ENCODE measurements at regions of chr16 and their contacts with region 1.

Region 1: GRCh38 chr16:57899771-57900661 is 70.9 kb downstream of the CNGB1 start:
- DNase-seq: peak; percentile 68 to 83 (median 82)
- ATAC-seq: peak; percentile 87
- H3K4me3 ChIP-seq: no peak overlapping the region
- H3K27ac ChIP-seq: no peak overlapping the region
- H3K4me1 ChIP-seq: peaks cover 2 to 8% of the 10 kb centered on the region in 2 experiments; a peak in 3 of 5 replicates
- H3K27me3 ChIP-seq: peaks cover 12 to 38% of the 10 kb centered on the region in 2 experiments; a peak in 4 of 5 replicates
- CTCF ChIP-seq: peak; percentile 85 to 92 (median 90)
- EP300 ChIP-seq: no peak
- POLR2A ChIP-seq: no peak
- RAD21 ChIP-seq: peak; percentile 87 to 94

Region 2: DNA sequence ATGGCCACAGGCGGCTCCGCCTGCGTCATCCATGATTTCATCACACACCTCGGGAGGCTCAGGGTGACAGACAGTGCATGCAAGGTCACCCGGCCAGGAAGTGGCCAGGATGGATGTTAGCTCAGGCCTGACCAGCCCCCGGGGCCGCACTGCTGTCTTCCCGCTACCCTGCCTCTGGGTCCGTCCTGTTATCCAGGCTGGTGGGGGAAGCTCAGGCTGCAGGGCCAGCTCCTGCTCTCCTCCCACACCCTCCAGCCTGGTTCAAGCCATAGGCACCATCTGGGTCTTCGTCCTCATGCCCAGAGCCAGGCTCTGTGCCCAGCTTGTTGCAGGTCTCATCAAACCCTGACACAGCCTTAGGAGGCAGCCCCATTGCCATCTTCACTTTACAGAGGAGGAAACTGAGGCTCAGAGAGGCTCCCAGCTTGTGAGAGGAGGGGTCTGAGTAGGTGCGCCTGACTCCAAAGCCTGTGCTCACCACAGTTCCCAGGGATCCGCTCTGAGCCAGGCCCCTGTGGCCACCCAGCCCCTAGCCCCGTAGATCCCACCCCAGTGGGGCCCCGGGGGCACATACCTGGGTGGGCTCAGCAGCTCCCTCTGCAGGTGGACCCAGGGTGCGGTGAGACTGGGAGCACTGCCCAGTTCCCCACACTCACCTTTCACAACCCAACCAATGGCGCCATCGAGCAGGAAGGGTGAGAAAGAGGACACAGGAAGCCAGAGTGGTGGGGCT is 232.3 kb before region 1 on chr16:
- CTCF ChIA-PET with region 1: no interaction called
- POLR2A ChIA-PET with region 1: no interaction called
- in situ Hi-C with region 1: no loop called
- intact Hi-C with region 1: loop called (anchors 10 kb)
- DNase-seq: peak; percentile 72 to 78 (median 75)
- ATAC-seq: peak; percentile 95
- H3K4me3 ChIP-seq: no peak overlapping the region
- H3K27ac ChIP-seq: peak overlapping the region; percentile 72
- H3K4me1 ChIP-seq: peaks cover 24 to 38% of the 10 kb centered on the region in 2 experiments
- H3K27me3 ChIP-seq: no peaks in the 10 kb centered on the region
- CTCF ChIP-seq: peak; percentile 48 to 63 (median 51)
- EP300 ChIP-seq: peak; percentile 84
- POLR2A ChIP-seq: no peak
- RAD21 ChIP-seq: 0 out of 4 replicates have a peak, but pooled peaks of 1 of the 2 experiments have one; percentile 18

Region 3: DNA sequence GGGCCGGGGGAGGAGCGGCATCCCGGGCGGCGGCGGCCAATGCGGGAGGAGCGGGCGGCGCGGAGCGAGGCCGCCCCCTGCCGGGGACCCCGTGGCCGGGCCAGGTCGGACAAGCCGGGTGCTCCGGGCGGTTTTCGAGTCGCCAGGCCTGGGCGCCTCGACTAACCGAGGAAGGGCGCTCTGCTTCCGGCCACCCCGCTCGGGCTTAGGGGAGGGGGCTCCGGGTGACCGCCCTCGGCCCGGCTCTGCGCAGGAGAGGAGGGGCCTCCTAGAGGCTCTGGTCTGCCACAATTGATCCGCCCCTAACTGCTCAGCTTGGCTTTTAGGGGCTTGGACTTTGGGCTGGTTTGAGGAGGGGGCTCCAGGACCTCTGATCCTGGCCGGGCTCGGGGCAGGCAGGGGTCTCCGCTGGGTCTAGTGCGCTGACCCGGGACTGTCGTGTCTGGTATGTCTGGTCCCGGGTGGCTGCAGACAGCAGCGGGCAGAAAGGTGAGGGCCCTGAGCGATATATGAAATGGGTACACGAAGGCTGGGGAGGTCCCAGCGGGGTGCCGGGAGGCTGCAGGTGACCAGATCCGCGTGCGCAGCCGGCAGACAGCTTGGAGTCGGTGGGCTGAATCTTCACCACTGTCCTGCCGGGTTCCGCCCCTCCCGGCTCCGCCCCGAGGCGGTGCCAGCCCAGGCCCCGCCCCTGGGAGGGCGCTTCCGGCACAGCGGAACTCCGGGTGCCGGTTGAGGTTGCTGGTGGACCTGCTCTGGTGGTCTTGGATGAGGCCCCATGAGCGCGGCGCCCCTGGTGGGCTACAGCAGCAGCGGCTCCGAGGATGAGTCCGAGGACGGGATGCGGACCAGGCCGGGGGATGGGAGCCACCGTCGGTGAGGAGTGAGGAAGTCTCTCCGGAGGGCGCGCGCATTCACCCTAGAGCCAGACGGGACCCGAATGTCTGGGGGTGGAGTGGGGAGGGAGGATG is 101.0 kb after region 1 on chr16 and contains the start of gene USB1:
- CTCF ChIA-PET with region 1: interaction called, 33 read pairs
- POLR2A ChIA-PET with region 1: interaction called, 3 read pairs
- in situ Hi-C with region 1: loop called (anchors 5 kb)
- intact Hi-C with region 1: loop called (anchors 1 kb)
- DNase-seq: peak; percentile 93 to 96 (median 95)
- ATAC-seq: peak; percentile 94
- H3K4me3 ChIP-seq: peak within 1 kb of the TSS; percentile 94
- H3K27ac ChIP-seq: peak within 1 kb of the TSS; percentile 71
- H3K4me1 ChIP-seq: peaks cover 21 to 31% of the 10 kb centered on the region in 2 experiments; a peak in 4 of 5 replicates
- H3K27me3 ChIP-seq: no peaks in the 10 kb centered on the region
- CTCF ChIP-seq: peak; percentile 60 to 85 (median 79); a peak in 5 of 6 replicates
- EP300 ChIP-seq: no peak
- POLR2A ChIP-seq: peak; percentile 88
- RAD21 ChIP-seq: peak; percentile 71 to 76
- polyA plus RNA-seq, gene USB1: 11.6 to 12.1 TPM

Region 4: GRCh38 chr16:58098207-58099096 is 198.4 kb after region 1 on chr16:
- CTCF ChIA-PET with region 1: no interaction called
- POLR2A ChIA-PET with region 1: no interaction called
- in situ Hi-C with region 1: loop called (anchors 10 kb)
- intact Hi-C with region 1: no loop called
- DNase-seq: no peak
- ATAC-seq: no peak
- H3K4me3 ChIP-seq: no peak overlapping the region
- H3K27ac ChIP-seq: no peak overlapping the region
- H3K4me1 ChIP-seq: peaks cover 0 to 8% of the 10 kb centered on the region in 2 experiments; a peak in 2 of 5 replicates
- H3K27me3 ChIP-seq: peaks cover 4 to 13% of the 10 kb centered on the region in 2 experiments; a peak in 3 of 5 replicates
- CTCF ChIP-seq: no peak
- EP300 ChIP-seq: no peak
- POLR2A ChIP-seq: no peak
- RAD21 ChIP-seq: no peak

Region 5: GRCh38 chr16:58121132-58121531 is 221.1 kb after region 1 on chr16:
- CTCF ChIA-PET with region 1: no interaction called
- POLR2A ChIA-PET with region 1: no interaction called
- in situ Hi-C with region 1: no loop called
- intact Hi-C with region 1: loop called (anchors 2 kb)
- DNase-seq: peak; percentile 25 to 87 (median 58)
- ATAC-seq: peak; percentile 78
- H3K4me3 ChIP-seq: peak overlapping the region; percentile 25; the same call in 1 of the 2 replicates
- H3K27ac ChIP-seq: peak overlapping the region; percentile 72
- H3K4me1 ChIP-seq: peaks cover 13 to 37% of the 10 kb centered on the region in 2 experiments; a peak in 4 of 5 replicates
- H3K27me3 ChIP-seq: no peaks in the 10 kb centered on the region
- CTCF ChIP-seq: no peak
- EP300 ChIP-seq: peak; percentile 53; the same call in 1 of the 2 replicates
- POLR2A ChIP-seq: no peak
- RAD21 ChIP-seq: no peak

Region 6: GRCh38 chr16:58487566-58488351 is 587.7 kb after region 1 on chr16:
- CTCF ChIA-PET with region 1: interaction called, 3 read pairs
- POLR2A ChIA-PET with region 1: no interaction called
- in situ Hi-C with region 1: no loop called
- intact Hi-C with region 1: loop called (anchors 10 kb)
- DNase-seq: peak; percentile 83 to 87 (median 84)
- ATAC-seq: peak; percentile 97
- H3K4me3 ChIP-seq: no peak overlapping the region
- H3K27ac ChIP-seq: no peak overlapping the region
- H3K4me1 ChIP-seq: peaks cover 10 to 24% of the 10 kb centered on the region in 2 experiments; a peak in 4 of 5 replicates
- H3K27me3 ChIP-seq: peaks cover 0 to 38% of the 10 kb centered on the region in 2 experiments; a peak in 3 of 5 replicates
- CTCF ChIP-seq: peak; percentile 90 to 97 (median 92)
- EP300 ChIP-seq: no peak
- POLR2A ChIP-seq: no peak
- RAD21 ChIP-seq: peak; percentile 94 to 98

Region 7: DNA sequence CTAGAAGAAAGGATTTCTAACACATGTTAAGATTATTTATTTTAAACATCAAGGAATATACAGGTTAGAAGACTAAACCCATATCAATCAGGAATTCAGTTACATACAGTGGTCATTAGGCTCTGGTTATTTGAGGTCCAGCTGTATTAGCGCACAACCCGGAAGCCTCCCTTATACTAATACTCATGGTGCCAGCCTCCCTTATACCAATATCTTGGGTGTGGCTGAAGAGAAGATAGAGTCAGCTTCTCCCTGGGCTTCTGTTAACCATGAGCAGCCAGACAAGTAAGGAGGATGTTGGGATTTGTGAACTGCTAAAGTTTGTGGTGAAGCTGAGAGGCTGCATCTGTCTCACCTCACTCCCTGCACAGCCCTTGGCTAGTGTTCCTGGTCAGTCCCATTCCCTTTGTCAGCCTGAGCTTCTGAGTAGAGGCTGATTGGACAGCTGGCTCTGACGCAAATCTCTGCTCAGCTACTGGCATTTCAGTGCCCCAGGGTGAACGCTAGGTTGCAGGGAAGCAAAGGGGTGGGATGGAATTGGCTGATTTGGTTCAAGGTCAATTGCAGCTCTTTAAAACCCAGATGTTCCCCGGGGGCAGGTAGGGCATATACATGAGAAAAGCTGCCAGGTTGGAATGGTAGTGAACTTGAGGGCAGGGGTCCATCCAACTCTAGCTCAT is 752.6 kb after region 1 on chr16:
- CTCF ChIA-PET with region 1: no interaction called
- POLR2A ChIA-PET with region 1: interaction called, 3 read pairs
- in situ Hi-C with region 1: no loop called
- intact Hi-C with region 1: loop called (anchors 10 kb)
- DNase-seq: no peak
- ATAC-seq: peak; percentile 10; the same call in 1 of the 3 replicates
- H3K4me3 ChIP-seq: no peak overlapping the region
- H3K27ac ChIP-seq: no peak overlapping the region
- H3K4me1 ChIP-seq: no peaks in the 10 kb centered on the region
- H3K27me3 ChIP-seq: peaks cover 0 to 7% of the 10 kb centered on the region in 2 experiments; a peak in 2 of 5 replicates
- CTCF ChIP-seq: no peak
- EP300 ChIP-seq: no peak
- POLR2A ChIP-seq: no peak
- RAD21 ChIP-seq: no peak

Measured in K562 (cell line).